ENCODE measurements at regions of chr13 and their contacts with region 1.

Region 1: DNA sequence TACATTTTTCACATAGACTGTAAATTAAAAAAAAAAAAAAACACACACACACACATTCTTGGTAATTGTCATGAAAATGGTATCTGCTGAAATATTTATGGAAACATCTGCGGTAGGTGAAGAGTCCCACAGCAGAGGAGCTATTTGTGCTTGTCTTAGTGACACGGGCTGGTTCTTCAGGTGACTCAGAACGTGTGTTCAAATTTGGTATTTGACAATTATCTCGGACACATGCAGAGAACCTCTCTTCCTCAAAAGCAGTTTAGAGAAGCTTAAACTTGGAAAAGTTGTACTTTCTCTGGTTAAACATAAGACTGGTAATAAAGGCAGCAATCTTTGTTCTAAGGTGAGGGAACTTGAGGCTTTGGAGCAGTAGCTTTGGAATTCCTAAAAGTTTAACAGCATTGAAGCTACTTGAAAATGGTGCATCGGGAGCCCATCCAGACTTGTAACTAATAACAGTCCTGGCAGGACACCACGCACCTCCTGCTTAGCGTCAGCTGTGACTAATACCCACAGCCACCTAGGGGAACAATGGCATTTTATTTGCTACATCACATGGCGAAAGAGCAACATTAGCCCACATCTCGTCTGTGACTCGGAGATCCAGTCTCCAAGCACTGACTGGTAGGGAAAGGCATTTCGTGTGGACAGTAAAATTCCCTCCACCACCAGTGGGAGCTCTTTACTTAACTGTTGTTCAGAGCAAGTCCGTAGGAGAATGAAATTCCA is 1505.1 kb upstream of the SLC10A2 start:
- DNase-seq: peak; percentile 72 to 75
- H3K4me3 ChIP-seq: peak overlapping the region; percentile 26; the same call in 1 of the 2 replicates
- H3K27ac ChIP-seq: no peak overlapping the region
- H3K4me1 ChIP-seq: peaks cover 7% of the 10 kb centered on the region; the same call in 1 of the 2 replicates
- H3K27me3 ChIP-seq: no peaks in the 10 kb centered on the region
- CTCF ChIP-seq: peak; percentile 78

Region 2: DNA sequence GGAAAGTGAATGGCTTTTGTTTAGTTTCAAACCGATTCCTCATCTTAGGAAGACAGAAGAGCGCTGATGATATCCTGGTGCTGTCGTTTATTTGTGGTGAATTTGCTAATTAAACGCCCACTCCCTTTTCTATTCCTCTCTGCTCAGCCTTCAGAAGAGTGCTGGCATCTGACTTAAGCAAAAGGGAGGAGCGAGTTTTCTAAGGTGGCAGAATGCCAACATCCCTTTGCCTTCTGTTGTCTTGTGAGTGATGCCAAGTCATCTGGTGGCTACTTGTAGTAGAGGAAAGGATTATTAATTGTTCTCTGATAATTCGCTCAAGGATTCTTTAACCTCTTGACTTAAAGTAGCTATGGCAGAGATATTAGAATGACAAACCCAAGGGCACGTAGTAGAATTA is 1657.4 kb before region 1 on chr13:
- CTCF ChIA-PET with region 1: no interaction called
- POLR2A ChIA-PET with region 1: no interaction called
- intact Hi-C with region 1: loop called (anchors 5 kb)
- DNase-seq: peak in 1 of 2 experiments; percentile 6
- H3K4me3 ChIP-seq: no peak overlapping the region
- H3K27ac ChIP-seq: no peak overlapping the region
- H3K4me1 ChIP-seq: peaks cover 50% of the 10 kb centered on the region
- H3K27me3 ChIP-seq: no peaks in the 10 kb centered on the region
- CTCF ChIP-seq: no peak

Region 3: GRCh38 chr13:103883164-103883563 is 688.2 kb before region 1 on chr13:
- CTCF ChIA-PET with region 1: interaction called, 4 read pairs
- POLR2A ChIA-PET with region 1: no interaction called
- intact Hi-C with region 1: loop called (anchors 1 kb)
- DNase-seq: peak; percentile 91 to 98
- H3K4me3 ChIP-seq: no peak overlapping the region
- H3K27ac ChIP-seq: 0 out of 2 replicates have a peak overlapping the region, but pooled peaks have one; percentile 29
- H3K4me1 ChIP-seq: peaks cover 7% of the 10 kb centered on the region
- H3K27me3 ChIP-seq: no peaks in the 10 kb centered on the region
- CTCF ChIP-seq: peak; percentile 77

Region 4: DNA sequence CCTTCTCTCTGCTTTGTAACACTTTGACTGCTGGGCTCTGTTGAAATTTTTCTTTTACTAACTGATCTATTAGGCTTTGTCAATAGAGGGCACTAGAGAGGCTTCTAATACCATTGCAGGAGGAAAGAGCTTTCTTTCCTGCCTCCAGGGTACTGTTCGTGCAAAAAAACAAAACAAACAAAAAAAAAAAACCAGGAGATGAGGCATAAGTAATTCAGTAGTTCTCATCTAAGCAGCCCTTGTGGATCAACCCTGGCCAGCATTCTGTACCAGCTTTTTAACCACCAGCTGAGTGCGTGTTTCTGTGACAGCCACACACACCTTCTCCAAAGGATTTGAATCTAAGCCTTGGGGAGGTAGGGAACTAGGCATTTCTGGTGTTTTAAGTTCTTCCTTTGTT is 202.4 kb after region 1 on chr13:
- CTCF ChIA-PET with region 1: no interaction called
- POLR2A ChIA-PET with region 1: no interaction called
- intact Hi-C with region 1: loop called (anchors 10 kb)
- DNase-seq: peak in 1 of 2 experiments; percentile 45
- H3K4me3 ChIP-seq: no peak overlapping the region
- H3K27ac ChIP-seq: no peak overlapping the region
- H3K4me1 ChIP-seq: no peaks in the 10 kb centered on the region
- H3K27me3 ChIP-seq: no peaks in the 10 kb centered on the region
- CTCF ChIP-seq: peak; percentile 76

Region 5: DNA sequence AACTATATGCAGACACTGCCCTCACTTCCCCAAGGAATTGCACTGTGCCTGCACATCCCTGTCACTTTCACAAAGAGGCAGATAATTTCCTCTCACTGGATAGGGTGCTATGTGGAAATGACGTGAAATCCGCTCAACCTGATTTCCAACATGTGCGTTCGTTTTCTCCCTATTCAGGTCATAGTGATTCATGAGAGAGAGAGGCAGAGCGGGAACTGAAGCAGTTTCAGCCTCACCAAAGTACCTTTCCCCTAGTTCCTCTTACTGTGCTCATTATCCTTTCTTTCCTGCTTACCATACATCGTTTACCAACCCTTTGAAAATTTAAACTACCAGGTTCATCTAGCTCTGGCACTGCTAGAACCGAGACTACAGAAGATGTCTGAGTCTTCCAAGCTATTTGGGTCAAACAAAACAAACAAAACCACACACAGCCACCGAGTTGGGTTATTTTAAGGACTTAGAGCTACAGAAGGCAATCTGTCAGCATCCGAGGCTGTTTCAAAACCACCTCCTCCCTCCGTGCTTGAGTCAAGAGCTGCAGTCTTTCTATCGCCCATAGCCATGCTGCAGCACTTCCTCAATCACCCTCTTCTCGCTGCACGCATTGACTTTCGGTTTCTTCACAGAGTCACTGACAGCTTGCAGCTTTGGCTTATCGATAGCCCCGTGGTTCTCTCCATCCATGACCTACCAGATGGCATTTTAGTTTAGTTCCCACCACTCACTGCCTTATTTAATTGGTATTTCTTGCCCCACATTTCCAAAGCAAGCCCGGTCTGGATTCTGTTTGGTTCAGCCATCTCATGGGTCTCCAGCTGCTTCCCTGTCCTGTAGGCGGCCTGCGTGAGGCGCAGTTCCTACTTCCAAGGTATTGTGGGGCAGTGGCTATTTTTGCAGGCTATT is 568.3 kb after region 1 on chr13:
- CTCF ChIA-PET with region 1: interaction called, 4 read pairs
- POLR2A ChIA-PET with region 1: interaction called, 5 read pairs
- intact Hi-C with region 1: loop called (anchors 5 kb)
- DNase-seq: peak; percentile 53 to 77
- H3K4me3 ChIP-seq: peak overlapping the region; percentile 67
- H3K27ac ChIP-seq: peak overlapping the region; percentile 77
- H3K4me1 ChIP-seq: peaks cover 8% of the 10 kb centered on the region
- H3K27me3 ChIP-seq: no peaks in the 10 kb centered on the region
- CTCF ChIP-seq: peak; percentile 65; the same call in 1 of the 2 replicates

Region 6: GRCh38 chr13:105587786-105588185 is 1016.5 kb after region 1 on chr13:
- CTCF ChIA-PET with region 1: no interaction called
- POLR2A ChIA-PET with region 1: no interaction called
- intact Hi-C with region 1: loop called (anchors 5 kb)
- DNase-seq: peak; percentile 48 to 59
- H3K4me3 ChIP-seq: no peak overlapping the region
- H3K27ac ChIP-seq: no peak overlapping the region
- H3K4me1 ChIP-seq: peaks cover 12% of the 10 kb centered on the region
- H3K27me3 ChIP-seq: no peaks in the 10 kb centered on the region
- CTCF ChIP-seq: no peak